ENCODE measurements at regions of chr21 and their contacts with region 1.

Region 1: DNA sequence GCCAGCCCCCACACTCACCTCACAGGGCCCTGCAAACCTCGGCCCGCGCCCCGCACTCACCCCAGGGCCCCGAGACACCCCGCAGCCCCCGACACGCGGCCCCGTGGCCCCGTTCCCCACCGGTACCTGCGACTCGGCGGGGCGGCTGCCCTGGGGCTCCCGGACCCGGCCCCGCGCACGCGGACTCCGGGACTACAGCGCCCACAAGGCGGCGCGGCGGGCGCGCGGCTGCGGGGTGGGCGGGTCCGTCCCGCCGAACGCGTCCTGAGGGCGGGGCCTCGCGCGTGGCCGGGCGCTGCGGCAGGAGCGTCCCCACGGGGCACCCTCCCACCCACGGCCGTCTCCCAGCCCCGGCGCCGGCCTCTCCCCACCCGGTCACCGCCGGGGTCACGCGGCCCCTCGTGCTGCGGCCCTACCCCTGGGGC is at the start of gene SLC19A1:
- DNase-seq: peak; percentile 42 to 87 (median 67)
- ATAC-seq: peak; percentile 86
- H3K4me3 ChIP-seq: peak within 1 kb of the TSS; percentile 45 to 57
- H3K4me3 Mint-ChIP-seq: peak within 1 kb of the TSS; percentile 72
- H3K27ac ChIP-seq: peak within 1 kb of the TSS; percentile 30 to 54
- H3K27ac Mint-ChIP-seq: no peak within 1 kb of the TSS
- H3K4me1 ChIP-seq: peaks cover 17% of the 10 kb centered on the region
- H3K4me1 Mint-ChIP-seq: peaks cover 14% of the 10 kb centered on the region
- H3K27me3 ChIP-seq: no peaks in the 10 kb centered on the region
- H3K27me3 Mint-ChIP-seq: no peaks in the 10 kb centered on the region
- CTCF ChIP-seq: peak; percentile 40
- total RNA-seq, gene SLC19A1: 8.8 to 9.0 TPM

Region 2: DNA sequence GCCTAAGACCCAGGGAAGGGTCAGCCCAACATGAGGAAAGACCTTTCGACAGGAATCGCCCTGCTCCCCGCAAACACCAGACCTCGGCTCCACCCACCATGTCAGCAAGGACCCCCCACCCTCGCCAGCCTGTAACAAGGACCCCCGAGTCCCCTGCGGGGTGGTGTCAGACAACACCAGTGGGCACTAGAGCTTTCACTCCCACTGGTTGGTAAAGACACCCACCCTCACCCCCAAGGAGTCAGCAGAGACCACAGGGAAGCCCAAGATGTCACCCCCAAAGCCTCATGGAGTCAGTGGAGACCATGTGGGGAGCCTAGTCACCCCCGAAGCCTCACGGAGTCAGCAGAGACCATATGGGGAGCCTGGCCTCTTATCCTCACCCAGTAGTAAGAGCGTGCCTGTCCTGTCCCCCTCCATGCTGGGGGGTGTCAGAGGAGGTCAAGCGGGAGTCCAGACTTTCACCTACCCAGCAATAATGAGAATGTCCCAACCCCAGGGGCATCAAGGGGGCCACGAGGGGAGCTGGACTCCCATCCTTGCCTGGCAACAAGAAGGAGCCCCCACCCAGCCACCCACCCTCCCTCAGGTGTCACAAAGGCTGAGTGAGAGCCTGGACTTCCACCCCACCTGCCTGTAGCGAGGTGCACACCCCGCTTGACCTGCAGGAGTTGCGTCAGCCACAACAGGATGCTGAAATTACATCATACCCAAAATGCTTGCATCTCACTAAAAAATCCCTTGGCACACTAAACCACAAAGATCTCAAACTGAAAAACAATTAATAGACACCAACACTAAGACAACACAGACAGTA is 24.8 kb before region 1 on chr21:
- CTCF ChIA-PET with region 1: no interaction called
- POLR2A ChIA-PET with region 1: no interaction called
- intact Hi-C with region 1: no loop called
- DNase-seq: peak in 2 of 9 experiments; percentile 21 to 37
- ATAC-seq: peak; percentile 40
- H3K4me3 ChIP-seq: no peak overlapping the region
- H3K4me3 Mint-ChIP-seq: no peak overlapping the region
- H3K27ac ChIP-seq: no peak overlapping the region
- H3K27ac Mint-ChIP-seq: peak overlapping the region; percentile 5
- H3K4me1 ChIP-seq: no peaks in the 10 kb centered on the region
- H3K4me1 Mint-ChIP-seq: peaks cover 6% of the 10 kb centered on the region
- H3K27me3 ChIP-seq: no peaks in the 10 kb centered on the region
- H3K27me3 Mint-ChIP-seq: no peaks in the 10 kb centered on the region
- CTCF ChIP-seq: no peak

Region 3: GRCh38 chr21:45554477-45555175 is 12.4 kb after region 1 on chr21:
- CTCF ChIA-PET with region 1: no interaction called
- POLR2A ChIA-PET with region 1: no interaction called
- intact Hi-C with region 1: loop called in 1 of 2 experiments (anchors 1 kb)
- DNase-seq: peak; percentile 80 to 97 (median 91)
- ATAC-seq: peak; percentile 90
- H3K4me3 ChIP-seq: peak overlapping the region; percentile 73 to 81
- H3K4me3 Mint-ChIP-seq: peak overlapping the region; percentile 91
- H3K27ac ChIP-seq: peak overlapping the region; percentile 37 to 60
- H3K27ac Mint-ChIP-seq: peak overlapping the region; percentile 91
- H3K4me1 ChIP-seq: peaks cover 38% of the 10 kb centered on the region
- H3K4me1 Mint-ChIP-seq: peaks cover 31% of the 10 kb centered on the region
- H3K27me3 ChIP-seq: no peaks in the 10 kb centered on the region
- H3K27me3 Mint-ChIP-seq: no peaks in the 10 kb centered on the region
- CTCF ChIP-seq: peak; percentile 60

Region 4: GRCh38 chr21:45582128-45582527 is 39.9 kb after region 1 on chr21:
- CTCF ChIA-PET with region 1: no interaction called
- POLR2A ChIA-PET with region 1: no interaction called
- intact Hi-C with region 1: no loop called
- DNase-seq: no peak
- ATAC-seq: no peak
- H3K4me3 ChIP-seq: no peak overlapping the region
- H3K4me3 Mint-ChIP-seq: no peak overlapping the region
- H3K27ac ChIP-seq: no peak overlapping the region
- H3K27ac Mint-ChIP-seq: no peak overlapping the region
- H3K4me1 ChIP-seq: no peaks in the 10 kb centered on the region
- H3K4me1 Mint-ChIP-seq: no peaks in the 10 kb centered on the region
- H3K27me3 ChIP-seq: no peaks in the 10 kb centered on the region
- H3K27me3 Mint-ChIP-seq: peaks cover 4% of the 10 kb centered on the region
- CTCF ChIP-seq: no peak

Region 5: GRCh38 chr21:45670731-45671130 is 128.5 kb after region 1 on chr21:
- CTCF ChIA-PET with region 1: no interaction called
- POLR2A ChIA-PET with region 1: no interaction called
- intact Hi-C with region 1: no loop called
- DNase-seq: no peak
- ATAC-seq: no peak
- H3K4me3 ChIP-seq: no peak overlapping the region
- H3K4me3 Mint-ChIP-seq: no peak overlapping the region
- H3K27ac ChIP-seq: no peak overlapping the region
- H3K27ac Mint-ChIP-seq: no peak overlapping the region
- H3K4me1 ChIP-seq: no peaks in the 10 kb centered on the region
- H3K4me1 Mint-ChIP-seq: no peaks in the 10 kb centered on the region
- H3K27me3 ChIP-seq: no peaks in the 10 kb centered on the region
- H3K27me3 Mint-ChIP-seq: no peaks in the 10 kb centered on the region
- CTCF ChIP-seq: no peak

Region 6: DNA sequence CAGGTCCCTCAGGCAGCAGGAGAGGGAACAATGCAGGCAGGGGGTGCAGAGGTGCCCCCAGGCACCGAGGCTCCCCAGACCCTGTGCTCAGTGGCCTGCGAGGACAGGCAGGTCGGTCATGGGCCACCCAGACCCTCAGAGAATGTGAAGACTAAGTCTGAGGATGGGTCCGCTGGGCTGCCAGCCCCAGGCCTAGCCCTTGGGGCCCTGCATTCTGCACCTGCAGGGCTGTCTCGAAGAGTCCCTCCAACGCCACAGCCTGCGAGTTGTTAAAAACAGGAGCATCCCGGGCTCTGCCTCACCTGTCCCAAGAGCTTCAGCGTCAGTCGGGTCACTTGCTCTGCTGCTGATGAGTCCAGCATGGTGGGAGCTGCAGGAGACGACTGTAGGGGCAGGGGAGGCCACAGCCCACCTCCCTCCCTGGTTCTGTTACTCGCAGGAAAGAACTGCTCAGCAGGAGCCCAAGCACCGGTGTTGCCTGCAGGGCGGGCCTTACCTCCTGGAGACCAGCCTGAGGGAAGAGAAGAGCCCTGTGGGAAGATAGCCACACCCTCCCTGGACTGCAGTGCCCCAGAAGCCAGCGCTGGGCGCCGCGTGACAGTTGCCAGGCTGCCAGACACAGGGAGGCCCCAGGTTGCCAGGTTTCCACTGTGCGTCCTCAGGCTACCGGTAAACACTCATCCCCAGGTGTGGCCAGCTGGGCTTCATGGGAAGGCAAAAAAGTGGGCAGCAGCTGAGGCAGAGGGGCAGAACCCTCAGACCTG is 775.6 kb after region 1 on chr21:
- CTCF ChIA-PET with region 1: no interaction called
- POLR2A ChIA-PET with region 1: no interaction called
- intact Hi-C with region 1: no loop called
- DNase-seq: no peak
- ATAC-seq: no peak
- H3K4me3 ChIP-seq: no peak overlapping the region
- H3K4me3 Mint-ChIP-seq: no peak overlapping the region
- H3K27ac ChIP-seq: no peak overlapping the region
- H3K27ac Mint-ChIP-seq: no peak overlapping the region
- H3K4me1 ChIP-seq: peaks cover 7% of the 10 kb centered on the region
- H3K4me1 Mint-ChIP-seq: peaks cover 21% of the 10 kb centered on the region
- H3K27me3 ChIP-seq: no peaks in the 10 kb centered on the region
- H3K27me3 Mint-ChIP-seq: no peaks in the 10 kb centered on the region
- CTCF ChIP-seq: no peak

Measured in CD8-positive, alpha-beta T cell (primary cell).